Activated CD4-positive, alpha-beta memory T cell treated with anti-CD3 and anti-CD28 coated beads for 36 hours (primary cell): ENCODE measurements at regions of chr2 and their contacts with region 1.

Region 1: GRCh38 chr2:239944694-239945551 is 80.2 kb downstream of the NDUFA10 start:
- DNase-seq: peak; percentile 69
- H3K4me3 Mint-ChIP-seq: peak overlapping the region; percentile 12
- H3K27ac Mint-ChIP-seq: peak overlapping the region; percentile 64
- H3K4me1 Mint-ChIP-seq: peaks cover 10% of the 10 kb centered on the region
- H3K27me3 Mint-ChIP-seq: no peaks in the 10 kb centered on the region

Region 2: DNA sequence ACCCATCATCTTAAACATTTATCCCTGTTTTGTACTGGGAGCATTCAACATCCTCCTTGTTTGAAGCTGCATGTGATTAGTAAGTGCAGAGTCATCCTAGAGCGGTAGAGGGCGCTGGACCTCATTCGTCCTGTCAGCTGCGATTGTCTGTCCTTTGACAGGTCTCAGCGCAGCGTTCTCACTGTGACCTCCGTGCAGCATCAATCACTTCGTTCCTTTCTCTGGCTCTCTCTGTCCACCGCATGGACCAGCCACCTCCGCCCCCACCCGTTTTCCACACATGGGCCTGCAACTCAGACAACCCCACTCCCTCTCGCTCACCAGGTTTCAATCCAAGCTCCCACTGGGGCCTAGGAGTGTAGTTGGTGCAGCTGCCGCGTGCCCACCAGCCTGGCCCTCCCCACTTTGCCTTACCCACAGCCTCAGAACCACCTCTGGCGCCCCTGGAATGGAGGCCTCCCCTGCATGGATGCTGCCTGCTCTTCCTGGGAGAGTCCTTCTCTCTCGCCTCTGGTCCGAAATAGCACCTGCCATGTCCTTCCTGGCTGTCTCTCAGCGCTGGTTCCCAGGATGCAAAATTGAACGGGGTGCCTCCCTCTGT is 10.3 kb before region 1 on chr2:
- CTCF ChIA-PET with region 1: interaction called, 18 read pairs
- POLR2A ChIA-PET with region 1: no interaction called
- intact Hi-C with region 1: no loop called
- DNase-seq: peak; percentile 75
- H3K4me3 Mint-ChIP-seq: no peak overlapping the region
- H3K27ac Mint-ChIP-seq: no peak overlapping the region
- H3K4me1 Mint-ChIP-seq: peaks cover 8% of the 10 kb centered on the region
- H3K27me3 Mint-ChIP-seq: no peaks in the 10 kb centered on the region

Region 3: GRCh38 chr2:239966853-239967552 is 22.1 kb after region 1 on chr2:
- CTCF ChIA-PET with region 1: no interaction called
- POLR2A ChIA-PET with region 1: no interaction called
- intact Hi-C with region 1: no loop called
- DNase-seq: no peak
- H3K4me3 Mint-ChIP-seq: no peak overlapping the region
- H3K27ac Mint-ChIP-seq: no peak overlapping the region
- H3K4me1 Mint-ChIP-seq: no peaks in the 10 kb centered on the region
- H3K27me3 Mint-ChIP-seq: no peaks in the 10 kb centered on the region